Mammary epithelial cell (primary cell): ENCODE measurements at regions of chr5 and their contacts with region 1.

Region 1: DNA sequence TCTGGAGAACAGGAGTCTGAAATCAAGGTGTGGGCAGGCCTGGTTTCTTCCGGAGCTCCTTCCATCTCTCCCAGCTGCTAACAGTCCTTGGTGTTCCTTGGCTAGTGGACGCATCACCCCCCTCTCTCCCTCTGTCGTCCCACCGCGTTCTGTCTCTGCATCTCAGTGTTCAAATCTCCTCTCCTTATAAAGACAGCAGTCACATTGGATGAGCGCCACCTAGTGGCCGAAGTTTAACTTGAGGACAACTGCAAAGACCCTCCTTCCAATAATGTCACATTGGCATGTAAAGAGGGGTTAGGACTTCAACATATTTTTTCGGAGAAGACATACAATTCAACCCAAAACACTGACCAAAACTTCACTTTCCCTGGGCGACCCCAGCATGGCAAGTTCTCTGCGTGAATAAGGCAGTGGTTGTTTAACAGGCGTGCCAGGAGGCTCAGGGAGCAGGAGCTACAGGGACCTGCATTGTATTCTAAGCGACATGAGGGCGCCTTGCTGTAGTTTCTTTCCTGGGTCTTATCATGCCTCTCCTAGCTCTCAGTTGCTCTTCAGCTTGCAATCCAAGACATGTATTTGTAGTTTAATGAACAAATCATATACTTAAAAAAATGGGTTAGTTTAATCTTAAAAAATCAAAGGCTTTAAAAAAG is 27.9 kb upstream of the BASP1 start:
- DNase-seq: peak; percentile 52
- H3K4me3 ChIP-seq: no peak overlapping the region
- H3K27ac ChIP-seq: no peak overlapping the region
- H3K4me1 ChIP-seq: peaks cover 40% of the 10 kb centered on the region
- H3K27me3 ChIP-seq: no peaks in the 10 kb centered on the region
- CTCF ChIP-seq: peak; percentile 76 to 79

Region 2: GRCh38 chr5:16489322-16489791 is 700.2 kb before region 1 on chr5:
- CTCF ChIA-PET with region 1: no interaction called
- dilution Hi-C with region 1: no loop called
- in situ Hi-C with region 1: loop called in 1 of 2 experiments (anchors 25 kb)
- intact Hi-C with region 1: loop called (anchors 1 kb)
- DNase-seq: peak; percentile 52
- H3K4me3 ChIP-seq: no peak overlapping the region
- H3K27ac ChIP-seq: peak overlapping the region; percentile 38
- H3K4me1 ChIP-seq: peaks cover 23% of the 10 kb centered on the region
- H3K27me3 ChIP-seq: no peaks in the 10 kb centered on the region
- CTCF ChIP-seq: peak; percentile 69 to 75

Region 3: GRCh38 chr5:16690243-16690852 is 499.2 kb before region 1 on chr5:
- CTCF ChIA-PET with region 1: no interaction called
- dilution Hi-C with region 1: no loop called
- in situ Hi-C with region 1: loop called in 1 of 2 experiments (anchors 25 kb)
- intact Hi-C with region 1: loop called (anchors 1 kb)
- DNase-seq: peak; percentile 26
- H3K4me3 ChIP-seq: no peak overlapping the region
- H3K27ac ChIP-seq: no peak overlapping the region
- H3K4me1 ChIP-seq: no peaks in the 10 kb centered on the region
- H3K27me3 ChIP-seq: no peaks in the 10 kb centered on the region
- CTCF ChIP-seq: peak; percentile 80 to 83

Region 4: DNA sequence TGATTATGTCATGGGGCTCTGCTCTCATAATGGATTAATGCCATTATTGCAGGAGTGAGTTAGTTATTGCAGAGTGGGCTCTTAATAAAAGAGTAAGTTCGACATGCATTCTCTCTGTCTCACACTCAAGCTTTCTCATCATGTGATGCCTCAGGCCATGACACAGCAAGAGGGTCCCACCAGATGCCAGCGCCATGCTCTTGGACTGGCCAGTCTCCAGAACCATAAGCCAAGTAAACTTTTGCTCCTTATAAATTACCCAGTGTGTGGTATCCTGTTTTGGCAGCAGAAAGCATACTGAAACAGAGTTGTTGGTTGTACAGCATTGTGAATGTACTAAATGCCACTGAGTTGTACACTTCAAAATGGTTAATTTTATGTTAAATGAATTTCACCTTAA is 391.6 kb before region 1 on chr5:
- CTCF ChIA-PET with region 1: no interaction called
- dilution Hi-C with region 1: loop called (anchors 5 kb)
- in situ Hi-C with region 1: loop called (anchors 5 to 10 kb)
- intact Hi-C with region 1: no loop called
- DNase-seq: no peak
- H3K4me3 ChIP-seq: no peak overlapping the region
- H3K27ac ChIP-seq: no peak overlapping the region
- H3K4me1 ChIP-seq: no peaks in the 10 kb centered on the region
- H3K27me3 ChIP-seq: no peaks in the 10 kb centered on the region
- CTCF ChIP-seq: no peak

Region 5: GRCh38 chr5:16934123-16934522 is 255.4 kb before region 1 on chr5:
- CTCF ChIA-PET with region 1: interaction called, 7 read pairs
- dilution Hi-C with region 1: loop called (anchors 5 kb)
- in situ Hi-C with region 1: loop called (anchors 5 to 10 kb)
- intact Hi-C with region 1: loop called (anchors 1 kb)
- DNase-seq: peak; percentile 68
- H3K4me3 ChIP-seq: peak overlapping the region; percentile 90 to 97 (median 96)
- H3K27ac ChIP-seq: peak overlapping the region; percentile 95
- H3K4me1 ChIP-seq: peaks cover 30% of the 10 kb centered on the region
- H3K27me3 ChIP-seq: no peaks in the 10 kb centered on the region
- CTCF ChIP-seq: peak; percentile 86 to 95

Region 6: DNA sequence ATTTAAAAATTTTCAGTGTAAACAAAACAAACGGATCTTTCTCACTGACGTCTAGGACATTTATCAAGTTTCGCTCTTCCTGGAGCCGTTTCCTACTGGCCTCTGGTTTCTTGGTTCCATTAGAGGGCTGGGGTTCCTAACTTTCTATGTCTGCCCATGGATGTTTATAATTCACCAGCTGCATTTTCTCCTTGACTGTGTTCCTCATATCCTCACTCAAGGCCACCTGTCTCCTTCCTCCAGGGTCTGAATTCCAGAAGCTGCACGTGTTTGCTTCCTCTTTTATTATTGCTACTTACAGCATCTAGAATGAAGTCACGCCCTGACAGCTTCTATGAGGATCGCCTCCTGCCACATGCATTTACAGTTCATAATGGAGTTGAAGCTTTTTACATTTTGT is 46.2 kb before region 1 on chr5:
- CTCF ChIA-PET with region 1: no interaction called
- dilution Hi-C with region 1: no loop called
- in situ Hi-C with region 1: no loop called
- intact Hi-C with region 1: loop called (anchors 5 kb)
- DNase-seq: no peak
- H3K4me3 ChIP-seq: no peak overlapping the region
- H3K27ac ChIP-seq: no peak overlapping the region
- H3K4me1 ChIP-seq: peaks cover 6% of the 10 kb centered on the region
- H3K27me3 ChIP-seq: no peaks in the 10 kb centered on the region
- CTCF ChIP-seq: no peak

Region 7: GRCh38 chr5:17255471-17256021 is 66.0 kb after region 1 on chr5:
- CTCF ChIA-PET with region 1: no interaction called
- dilution Hi-C with region 1: no loop called
- in situ Hi-C with region 1: no loop called
- intact Hi-C with region 1: no loop called
- DNase-seq: peak; percentile 19
- H3K4me3 ChIP-seq: no peak overlapping the region
- H3K27ac ChIP-seq: no peak overlapping the region
- H3K4me1 ChIP-seq: peaks cover 40% of the 10 kb centered on the region
- H3K27me3 ChIP-seq: no peaks in the 10 kb centered on the region
- CTCF ChIP-seq: no peak